MCF 10A (cell line): ENCODE measurements at regions of chr1 and their contacts with region 1.

Region 1: GRCh38 chr1:234656856-234657654 is 47.1 kb upstream of the IRF2BP2 start:
- DNase-seq: peak; percentile 100
- H3K4me3 Mint-ChIP-seq: peak overlapping the region; percentile 67
- H3K27ac Mint-ChIP-seq: peak overlapping the region; percentile 91
- H3K4me1 Mint-ChIP-seq: peaks cover 57% of the 10 kb centered on the region
- H3K27me3 Mint-ChIP-seq: no peaks in the 10 kb centered on the region
- CTCF ChIP-seq: no peak

Region 2: GRCh38 chr1:234564642-234565037 is 92.4 kb before region 1 on chr1:
- CTCF ChIA-PET with region 1: no interaction called
- POLR2A ChIA-PET with region 1: interaction called, 16 read pairs
- intact Hi-C with region 1: no loop called
- DNase-seq: peak; percentile 100
- H3K4me3 Mint-ChIP-seq: no peak overlapping the region
- H3K27ac Mint-ChIP-seq: peak overlapping the region; percentile 80
- H3K4me1 Mint-ChIP-seq: peaks cover 25% of the 10 kb centered on the region
- H3K27me3 Mint-ChIP-seq: no peaks in the 10 kb centered on the region
- CTCF ChIP-seq: no peak

Region 3: DNA sequence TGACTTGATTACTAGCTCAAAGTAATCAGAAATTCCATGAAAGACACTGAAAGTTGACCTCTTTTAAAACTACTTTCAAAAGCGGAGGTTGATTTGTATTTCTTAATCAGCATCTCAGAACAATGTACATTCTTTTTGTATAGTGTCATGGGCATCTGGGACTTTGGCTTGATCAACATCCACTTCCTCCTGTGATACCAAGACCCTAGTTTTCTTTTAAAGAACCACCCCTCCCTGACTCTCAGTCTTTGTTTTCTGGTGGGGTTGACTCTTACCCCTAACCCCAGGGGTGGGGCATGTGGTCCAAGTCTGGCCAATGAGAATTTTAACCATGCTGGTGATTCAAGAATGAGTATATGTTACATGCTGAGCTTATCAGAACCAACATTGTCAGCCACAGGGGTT is 25.3 kb before region 1 on chr1:
- CTCF ChIA-PET with region 1: interaction called, 4 read pairs
- POLR2A ChIA-PET with region 1: interaction called, 46 read pairs
- intact Hi-C with region 1: no loop called
- DNase-seq: peak; percentile 75
- H3K4me3 Mint-ChIP-seq: no peak overlapping the region
- H3K27ac Mint-ChIP-seq: peak overlapping the region; percentile 78
- H3K4me1 Mint-ChIP-seq: peaks cover 27% of the 10 kb centered on the region
- H3K27me3 Mint-ChIP-seq: no peaks in the 10 kb centered on the region
- CTCF ChIP-seq: no peak

Region 4: GRCh38 chr1:234683861-234684632 is 27.0 kb after region 1 on chr1:
- CTCF ChIA-PET with region 1: interaction called, 8 read pairs
- POLR2A ChIA-PET with region 1: interaction called, 57 read pairs
- intact Hi-C with region 1: loop called (anchors 1 kb)
- DNase-seq: peak; percentile 100
- H3K4me3 Mint-ChIP-seq: no peak overlapping the region
- H3K27ac Mint-ChIP-seq: peak overlapping the region; percentile 27
- H3K4me1 Mint-ChIP-seq: peaks cover 10% of the 10 kb centered on the region
- H3K27me3 Mint-ChIP-seq: no peaks in the 10 kb centered on the region
- CTCF ChIP-seq: no peak

Region 5: GRCh38 chr1:234737967-234738314 is 80.9 kb after region 1 on chr1:
- CTCF ChIA-PET with region 1: no interaction called
- POLR2A ChIA-PET with region 1: no interaction called
- intact Hi-C with region 1: no loop called
- DNase-seq: no peak
- H3K4me3 Mint-ChIP-seq: no peak overlapping the region
- H3K27ac Mint-ChIP-seq: no peak overlapping the region
- H3K4me1 Mint-ChIP-seq: peaks cover 5% of the 10 kb centered on the region
- H3K27me3 Mint-ChIP-seq: no peaks in the 10 kb centered on the region
- CTCF ChIP-seq: no peak

Region 6: GRCh38 chr1:234997201-234997895 is 340.3 kb after region 1 on chr1:
- CTCF ChIA-PET with region 1: interaction called, 16 read pairs
- POLR2A ChIA-PET with region 1: interaction called, 39 read pairs
- intact Hi-C with region 1: loop called (anchors 1 kb)
- DNase-seq: peak; percentile 100
- H3K4me3 Mint-ChIP-seq: peak overlapping the region; percentile 58
- H3K27ac Mint-ChIP-seq: peak overlapping the region; percentile 93
- H3K4me1 Mint-ChIP-seq: peaks cover 26% of the 10 kb centered on the region
- H3K27me3 Mint-ChIP-seq: no peaks in the 10 kb centered on the region
- CTCF ChIP-seq: no peak

Region 7: DNA sequence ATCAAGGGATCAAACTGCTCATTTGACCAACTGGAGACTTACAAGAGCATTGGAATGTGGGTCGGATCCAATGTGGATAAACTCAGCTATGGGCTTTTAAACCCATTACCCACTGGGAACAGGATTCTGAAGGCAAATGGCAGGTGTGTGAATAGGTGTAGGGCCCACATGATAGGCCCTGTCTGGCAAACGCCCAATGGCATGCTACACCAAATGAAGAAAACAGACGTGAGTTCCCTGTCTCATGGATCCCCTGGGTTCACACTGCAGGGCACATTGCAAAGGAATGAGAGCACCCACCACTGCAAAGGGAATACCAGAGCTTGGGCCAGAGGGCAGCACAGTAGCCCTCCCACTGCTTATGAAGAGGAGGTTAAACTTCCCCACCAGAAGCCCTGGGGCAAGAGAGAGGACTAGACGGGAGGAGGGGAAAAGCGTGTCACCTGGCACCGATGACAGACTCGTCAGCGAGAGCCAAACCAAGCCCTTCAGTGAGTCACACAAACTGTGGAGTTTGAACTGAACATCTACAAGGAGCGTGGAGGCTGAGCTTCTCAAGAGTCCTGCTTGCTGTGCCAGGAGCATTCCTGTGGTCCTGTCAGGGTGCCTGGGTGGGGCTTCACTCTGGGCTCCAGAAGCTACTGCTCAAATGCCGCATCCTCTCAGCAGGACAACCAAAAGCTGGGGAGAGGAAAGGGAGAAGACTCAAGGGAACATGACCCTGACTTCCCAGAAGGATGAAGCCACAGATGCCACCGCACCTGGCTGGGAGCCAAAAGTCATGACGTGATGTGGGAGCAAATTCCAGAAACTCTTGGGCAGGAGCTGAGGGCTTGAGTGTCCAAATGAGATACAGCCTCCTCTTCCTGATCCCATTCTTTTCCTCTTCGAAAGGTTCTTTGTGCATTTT is 410.5 kb after region 1 on chr1:
- CTCF ChIA-PET with region 1: interaction called, 10 read pairs
- POLR2A ChIA-PET with region 1: interaction called, 63 read pairs
- intact Hi-C with region 1: no loop called
- DNase-seq: peak; percentile 100
- H3K4me3 Mint-ChIP-seq: peak overlapping the region; percentile 54
- H3K27ac Mint-ChIP-seq: peak overlapping the region; percentile 97
- H3K4me1 Mint-ChIP-seq: peaks cover 53% of the 10 kb centered on the region
- H3K27me3 Mint-ChIP-seq: no peaks in the 10 kb centered on the region
- CTCF ChIP-seq: no peak

Region 8: DNA sequence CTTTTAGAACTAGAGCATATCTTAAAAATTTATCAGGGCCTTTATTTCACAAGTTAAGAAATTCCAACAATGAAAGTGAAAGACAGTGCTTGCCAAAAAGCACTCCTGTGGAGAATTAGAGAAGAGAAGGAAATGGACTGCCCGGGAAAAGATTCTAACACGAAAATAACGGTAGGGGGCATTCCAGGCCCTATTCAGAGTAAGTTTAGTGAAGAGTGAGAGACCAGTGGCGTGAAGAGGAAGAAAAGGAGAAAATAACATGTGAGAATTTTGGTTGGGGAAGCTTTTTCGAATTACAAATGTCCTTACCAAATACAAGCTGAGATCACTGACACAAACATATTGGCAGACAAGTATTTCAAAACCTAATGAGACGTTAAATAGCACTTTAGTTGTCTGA is 542.4 kb after region 1 on chr1:
- CTCF ChIA-PET with region 1: no interaction called
- POLR2A ChIA-PET with region 1: no interaction called
- intact Hi-C with region 1: no loop called
- DNase-seq: peak; percentile 44
- H3K4me3 Mint-ChIP-seq: no peak overlapping the region
- H3K27ac Mint-ChIP-seq: peak overlapping the region; percentile 13
- H3K4me1 Mint-ChIP-seq: peaks cover 9% of the 10 kb centered on the region
- H3K27me3 Mint-ChIP-seq: no peaks in the 10 kb centered on the region
- CTCF ChIP-seq: peak; percentile 31